WTC11 (cell line): ENCODE measurements at regions of chr17 and their contacts with region 1.

Region 1: GRCh38 chr17:30236766-30237165 is 1.3 kb upstream of the SLC6A4 start:
- DNase-seq: peak; percentile 75
- ATAC-seq: peak; percentile 11
- H3K4me3 Mint-ChIP-seq: peak overlapping the region; percentile 54
- H3K27ac Mint-ChIP-seq: no peak overlapping the region
- H3K4me1 Mint-ChIP-seq: peaks cover 28% of the 10 kb centered on the region
- H3K27me3 Mint-ChIP-seq: peaks cover 82% of the 10 kb centered on the region
- CTCF ChIP-seq: no peak

Region 2: GRCh38 chr17:30203471-30203981 is 33.2 kb before region 1 on chr17:
- CTCF ChIA-PET with region 1: interaction called, 14 read pairs
- POLR2A ChIA-PET with region 1: no interaction called
- DNase-seq: peak; percentile 49
- ATAC-seq: peak; percentile 98
- H3K4me3 Mint-ChIP-seq: no peak overlapping the region
- H3K27ac Mint-ChIP-seq: no peak overlapping the region
- H3K4me1 Mint-ChIP-seq: 0 out of 2 replicates have a peak, but pooled peaks cover 4% of the 10 kb centered on the region
- H3K27me3 Mint-ChIP-seq: no peaks in the 10 kb centered on the region
- CTCF ChIP-seq: no peak

Region 3: GRCh38 chr17:30225919-30226553 is 10.7 kb before region 1 on chr17:
- CTCF ChIA-PET with region 1: interaction called, 10 read pairs
- POLR2A ChIA-PET with region 1: no interaction called
- DNase-seq: no peak
- ATAC-seq: no peak
- H3K4me3 Mint-ChIP-seq: no peak overlapping the region
- H3K27ac Mint-ChIP-seq: no peak overlapping the region
- H3K4me1 Mint-ChIP-seq: peaks cover 13% of the 10 kb centered on the region
- H3K27me3 Mint-ChIP-seq: peaks cover 2% of the 10 kb centered on the region; the same call in 1 of the 2 replicates
- CTCF ChIP-seq: no peak

Region 4: GRCh38 chr17:30495586-30495985 is 258.8 kb after region 1 on chr17:
- CTCF ChIA-PET with region 1: no interaction called
- POLR2A ChIA-PET with region 1: no interaction called
- DNase-seq: no peak
- ATAC-seq: no peak
- H3K4me3 Mint-ChIP-seq: no peak overlapping the region
- H3K27ac Mint-ChIP-seq: no peak overlapping the region
- H3K4me1 Mint-ChIP-seq: no peaks in the 10 kb centered on the region
- H3K27me3 Mint-ChIP-seq: no peaks in the 10 kb centered on the region
- CTCF ChIP-seq: no peak